Endothelial cell of umbilical vein (primary cell): ENCODE measurements at regions of chr3 and their contacts with region 1.

Region 1: GRCh38 chr3:8441969-8442559 is 59.6 kb upstream of the LMCD1 start:
- DNase-seq: peak; percentile 76
- H3K4me3 ChIP-seq: no peak overlapping the region
- H3K27ac ChIP-seq: no peak overlapping the region
- H3K4me1 ChIP-seq: peaks cover 30% of the 10 kb centered on the region
- H3K27me3 ChIP-seq: no peaks in the 10 kb centered on the region
- CTCF ChIP-seq: peak; percentile 62 to 75
- POLR2A ChIP-seq: no peak

Region 2: GRCh38 chr3:6449099-6449498 is 1993.0 kb before region 1 on chr3:
- CTCF ChIA-PET with region 1: no interaction called
- POLR2A ChIA-PET with region 1: no interaction called
- dilution Hi-C with region 1: no loop called
- intact Hi-C with region 1: loop called (anchors 2 kb)
- DNase-seq: peak; percentile 87
- H3K4me3 ChIP-seq: no peak overlapping the region
- H3K27ac ChIP-seq: peak overlapping the region; percentile 76
- H3K4me1 ChIP-seq: peaks cover 40% of the 10 kb centered on the region
- H3K27me3 ChIP-seq: no peaks in the 10 kb centered on the region
- CTCF ChIP-seq: no peak
- POLR2A ChIP-seq: no peak

Region 3: GRCh38 chr3:8282541-8283165 is 159.4 kb before region 1 on chr3:
- CTCF ChIA-PET with region 1: no interaction called
- POLR2A ChIA-PET with region 1: no interaction called
- dilution Hi-C with region 1: no loop called
- intact Hi-C with region 1: no loop called
- DNase-seq: no peak
- H3K4me3 ChIP-seq: no peak overlapping the region
- H3K27ac ChIP-seq: no peak overlapping the region
- H3K4me1 ChIP-seq: no peaks in the 10 kb centered on the region
- H3K27me3 ChIP-seq: no peaks in the 10 kb centered on the region
- CTCF ChIP-seq: no peak
- POLR2A ChIP-seq: no peak

Region 4: DNA sequence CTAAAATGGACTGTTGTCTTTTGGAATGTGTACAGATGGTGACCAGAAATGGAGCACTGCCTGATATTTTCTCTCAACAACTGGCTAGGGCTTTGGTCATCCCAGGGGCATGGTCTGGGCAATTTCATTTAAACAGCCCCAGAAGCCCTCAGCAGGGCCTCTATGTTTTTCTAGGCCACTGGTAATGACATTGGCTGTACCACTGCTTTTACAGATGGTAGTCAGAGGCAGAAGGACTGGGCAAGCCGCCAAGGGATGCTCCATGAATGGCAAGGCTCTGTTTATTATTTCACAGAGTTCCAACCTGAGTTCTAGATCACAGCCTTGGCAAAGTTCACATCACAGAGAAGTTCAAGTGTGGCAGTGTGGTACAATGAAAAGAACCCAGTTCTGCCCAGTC is 22.6 kb after region 1 on chr3:
- CTCF ChIA-PET with region 1: interaction called, 9 read pairs
- POLR2A ChIA-PET with region 1: no interaction called
- dilution Hi-C with region 1: no loop called
- intact Hi-C with region 1: loop called (anchors 2 kb)
- DNase-seq: no peak
- H3K4me3 ChIP-seq: no peak overlapping the region
- H3K27ac ChIP-seq: no peak overlapping the region
- H3K4me1 ChIP-seq: no peaks in the 10 kb centered on the region
- H3K27me3 ChIP-seq: no peaks in the 10 kb centered on the region
- CTCF ChIP-seq: no peak
- POLR2A ChIP-seq: no peak

Region 5: GRCh38 chr3:8540456-8540855 is 98.4 kb after region 1 on chr3:
- CTCF ChIA-PET with region 1: interaction called, 7 read pairs
- POLR2A ChIA-PET with region 1: interaction called, 4 read pairs
- dilution Hi-C with region 1: no loop called
- intact Hi-C with region 1: loop called (anchors 1 kb)
- DNase-seq: peak; percentile 64
- H3K4me3 ChIP-seq: no peak overlapping the region
- H3K27ac ChIP-seq: peak overlapping the region; percentile 3
- H3K4me1 ChIP-seq: peaks cover 16% of the 10 kb centered on the region
- H3K27me3 ChIP-seq: no peaks in the 10 kb centered on the region
- CTCF ChIP-seq: no peak
- POLR2A ChIP-seq: no peak

Region 6: DNA sequence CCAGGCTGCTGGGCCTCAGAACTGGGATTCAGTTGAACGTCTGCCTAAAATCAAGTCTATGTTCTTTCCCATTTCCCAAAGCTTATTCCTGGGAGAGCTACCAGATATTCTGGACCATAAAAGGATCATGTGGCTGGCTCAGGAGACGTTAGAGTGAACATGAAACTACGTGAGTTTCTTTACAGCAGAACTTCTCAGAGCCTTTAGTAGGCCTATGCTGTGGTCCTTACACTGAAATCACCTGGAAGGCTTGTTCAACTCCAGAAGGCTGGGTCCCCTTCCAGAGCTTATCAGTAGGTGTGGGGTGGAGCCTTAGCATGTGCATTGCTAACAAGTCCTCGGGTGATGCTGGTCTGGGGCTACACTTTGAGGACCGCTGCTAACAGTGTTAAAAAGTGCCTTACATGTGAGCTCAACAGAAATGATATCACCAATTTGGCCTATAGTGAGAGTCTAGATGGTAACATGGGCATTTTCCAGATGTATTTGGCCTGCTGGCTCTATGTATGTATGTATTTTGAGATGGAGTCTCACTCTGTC is 110.2 kb after region 1 on chr3:
- CTCF ChIA-PET with region 1: no interaction called
- POLR2A ChIA-PET with region 1: no interaction called
- dilution Hi-C with region 1: no loop called
- intact Hi-C with region 1: no loop called
- DNase-seq: no peak
- H3K4me3 ChIP-seq: no peak overlapping the region
- H3K27ac ChIP-seq: no peak overlapping the region
- H3K4me1 ChIP-seq: no peaks in the 10 kb centered on the region
- H3K27me3 ChIP-seq: no peaks in the 10 kb centered on the region
- CTCF ChIP-seq: no peak
- POLR2A ChIP-seq: no peak

Region 7: GRCh38 chr3:8607234-8608040 is 165.4 kb after region 1 on chr3:
- CTCF ChIA-PET with region 1: interaction called, 78 read pairs
- POLR2A ChIA-PET with region 1: no interaction called
- dilution Hi-C with region 1: no loop called
- intact Hi-C with region 1: loop called (anchors 1 kb)
- DNase-seq: peak; percentile 78
- H3K4me3 ChIP-seq: no peak overlapping the region
- H3K27ac ChIP-seq: no peak overlapping the region
- H3K4me1 ChIP-seq: no peaks in the 10 kb centered on the region
- H3K27me3 ChIP-seq: peaks cover 0 to 2% of the 10 kb centered on the region in 2 experiments
- CTCF ChIP-seq: peak; percentile 54 to 79
- POLR2A ChIP-seq: no peak

Region 8: DNA sequence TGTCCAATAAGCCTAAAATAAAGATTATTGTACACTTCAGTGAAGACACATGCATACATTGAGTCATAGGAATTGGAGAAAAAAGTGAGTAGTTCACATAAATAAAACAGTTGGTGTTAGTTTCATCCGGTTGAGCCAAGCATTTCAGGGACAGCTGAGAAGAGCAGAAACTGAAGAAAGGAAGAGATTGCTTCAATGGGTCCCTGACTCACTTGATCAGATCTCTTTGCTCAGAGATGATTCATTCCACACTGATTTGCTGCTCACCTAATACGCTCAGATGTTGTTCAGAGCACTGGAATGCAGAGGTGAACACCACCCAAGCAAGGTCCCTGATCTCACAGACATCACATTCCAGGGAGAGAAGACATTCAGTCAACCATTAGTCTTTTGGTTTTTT is 427.5 kb after region 1 on chr3:
- CTCF ChIA-PET with region 1: no interaction called
- POLR2A ChIA-PET with region 1: no interaction called
- dilution Hi-C with region 1: no loop called
- intact Hi-C with region 1: loop called (anchors 10 kb)
- DNase-seq: peak; percentile 71
- H3K4me3 ChIP-seq: no peak overlapping the region
- H3K27ac ChIP-seq: peak overlapping the region; percentile 71
- H3K4me1 ChIP-seq: peaks cover 23% of the 10 kb centered on the region
- H3K27me3 ChIP-seq: no peaks in the 10 kb centered on the region
- CTCF ChIP-seq: no peak
- POLR2A ChIP-seq: no peak